Ascending aorta (tissue), 2 donors: ENCODE measurements at regions of chr15 and their contacts with region 1.

Region 1: DNA sequence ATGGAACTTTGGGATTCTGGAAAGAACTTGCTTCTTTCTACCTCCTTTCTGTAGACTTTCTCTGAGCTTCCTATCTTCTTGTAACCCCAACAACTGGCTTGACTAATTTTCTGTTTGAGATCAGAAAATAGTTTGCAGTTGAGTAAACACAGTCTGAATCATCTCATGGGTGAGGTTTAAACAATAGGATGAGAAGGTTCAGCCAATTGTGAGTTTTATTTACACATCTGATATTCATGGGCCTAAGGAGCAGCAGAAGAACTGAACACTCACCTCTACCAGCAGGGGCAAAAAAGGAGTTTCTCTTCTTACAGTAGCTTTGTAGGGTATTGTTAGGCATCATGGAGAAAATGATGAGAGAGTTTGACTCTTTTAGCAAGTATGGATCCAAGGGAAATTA is 54.2 kb downstream of the DTWD1 start:
- DNase-seq: no peak
- H3K4me3 ChIP-seq: no peak overlapping the region
- H3K27ac ChIP-seq: no peak overlapping the region
- H3K4me1 ChIP-seq: peaks cover 0 to 3% of the 10 kb centered on the region in 2 donors
- H3K27me3 ChIP-seq: no peaks in the 10 kb centered on the region
- CTCF ChIP-seq: no peak

Region 2: DNA sequence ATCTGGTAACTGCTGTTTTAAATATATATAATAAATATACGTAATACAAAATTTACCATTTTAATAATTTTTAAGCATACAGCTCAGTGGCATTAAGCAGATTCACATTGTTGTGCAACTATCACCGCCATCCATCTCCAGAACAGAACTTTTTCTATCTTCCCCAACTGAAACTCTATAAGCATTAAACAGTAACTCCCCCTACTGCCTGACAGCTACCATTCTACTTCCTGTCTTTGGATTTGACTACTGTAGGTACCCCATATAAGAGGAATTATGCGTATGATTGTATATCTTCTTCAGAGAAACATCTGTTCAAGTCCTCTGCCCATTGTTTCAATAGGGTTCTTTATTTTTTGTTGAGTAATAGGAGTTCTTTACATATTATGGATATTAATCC is 760.3 kb before region 1 on chr15:
- intact Hi-C with region 1: no loop called
- DNase-seq: no peak
- H3K4me3 ChIP-seq: no peak overlapping the region
- H3K27ac ChIP-seq: no peak overlapping the region
- H3K4me1 ChIP-seq: no peaks in the 10 kb centered on the region
- H3K27me3 ChIP-seq: no peaks in the 10 kb centered on the region
- CTCF ChIP-seq: no peak

Region 3: GRCh38 chr15:49452595-49452994 is 222.4 kb before region 1 on chr15:
- intact Hi-C with region 1: no loop called
- DNase-seq: no peak
- H3K4me3 ChIP-seq: no peak overlapping the region
- H3K27ac ChIP-seq: no peak overlapping the region
- H3K4me1 ChIP-seq: no peaks in the 10 kb centered on the region
- H3K27me3 ChIP-seq: no peaks in the 10 kb centered on the region
- CTCF ChIP-seq: no peak

Region 4: DNA sequence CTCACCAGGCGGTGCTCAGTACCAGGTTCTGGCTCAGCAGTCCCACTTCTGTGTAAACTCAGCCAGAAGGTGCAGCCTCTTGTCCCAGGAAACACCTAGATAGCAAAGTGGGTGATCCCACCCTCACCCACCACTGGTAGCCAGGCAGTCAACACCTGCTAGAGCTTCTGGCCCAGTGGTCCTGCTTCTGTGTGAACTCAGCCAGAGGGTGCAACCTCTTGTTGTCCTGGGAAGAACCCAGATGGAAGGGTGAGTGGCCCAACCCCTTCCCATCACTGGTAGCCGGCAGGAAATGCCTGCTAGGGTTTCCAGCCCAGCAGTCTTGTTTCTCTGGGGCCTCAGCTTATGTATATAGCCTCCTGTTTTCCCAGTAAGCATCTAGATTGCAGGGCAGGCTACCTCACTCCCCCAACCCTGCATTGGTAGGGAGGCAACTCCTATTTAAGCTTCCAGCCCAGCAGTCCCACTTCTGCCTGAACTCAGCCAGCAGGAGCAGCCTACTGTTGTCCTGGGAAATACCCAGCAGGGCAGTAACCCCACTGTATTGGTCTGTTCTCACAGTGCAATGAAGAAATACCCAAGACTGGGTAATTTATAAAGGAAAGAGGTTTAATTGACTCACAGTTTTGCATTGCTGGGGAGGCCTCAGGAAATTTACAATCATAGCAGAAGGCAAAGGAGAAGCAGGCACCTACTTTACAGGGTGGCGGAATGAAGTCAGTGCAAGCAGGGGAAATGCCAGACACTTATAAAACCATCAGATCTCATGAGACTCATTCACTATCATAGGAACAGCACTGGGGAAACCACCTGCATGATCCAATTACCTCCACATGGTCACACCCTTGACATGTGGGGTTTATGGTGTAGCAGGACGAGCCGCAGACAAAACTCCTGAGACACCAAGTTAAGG is 56.4 kb after region 1 on chr15:
- intact Hi-C with region 1: loop called (anchors 10 kb)
- DNase-seq: no peak
- H3K4me3 ChIP-seq: no peak overlapping the region
- H3K27ac ChIP-seq: no peak overlapping the region
- H3K4me1 ChIP-seq: no peaks in the 10 kb centered on the region
- H3K27me3 ChIP-seq: no peaks in the 10 kb centered on the region
- CTCF ChIP-seq: no peak